ENCODE measurements at regions of chr12 and their contacts with region 1.

Region 1: DNA sequence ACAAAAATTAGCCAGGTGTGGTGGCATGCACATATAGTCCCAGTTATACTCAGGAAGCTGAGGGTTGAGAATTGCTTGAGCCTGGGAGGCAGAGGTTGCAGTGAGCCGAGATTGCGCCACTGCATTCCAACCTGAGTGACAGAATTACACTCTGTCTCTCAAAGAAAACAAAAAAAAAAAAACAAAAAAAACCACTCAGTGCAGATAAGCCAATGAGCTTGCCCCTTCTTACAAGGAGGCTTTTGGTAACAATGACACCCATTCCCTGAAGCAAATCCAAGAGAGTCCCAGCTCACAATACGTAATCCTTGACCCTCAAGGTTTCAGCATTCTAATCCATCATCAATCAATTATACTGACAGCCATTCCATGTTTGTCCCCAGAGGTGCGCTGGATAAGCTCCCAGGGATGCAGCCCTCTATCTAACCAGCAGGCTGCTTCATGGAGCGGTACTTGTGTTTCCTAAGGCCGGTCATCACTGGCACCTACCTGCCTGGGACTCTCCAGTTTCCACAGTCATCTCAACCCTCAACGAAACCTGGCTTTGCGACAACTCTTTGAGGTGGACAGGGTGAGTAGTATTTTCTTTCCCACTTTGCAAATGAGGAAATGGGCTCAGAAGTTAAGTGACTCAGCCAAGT is 12.4 kb downstream of the GCN1 start:
- DNase-seq: no peak
- ATAC-seq: 0 out of 3 replicates have a peak, but pooled peaks have one; percentile 20
- H3K4me3 ChIP-seq: no peak overlapping the region
- H3K27ac ChIP-seq: no peak overlapping the region
- H3K4me1 ChIP-seq: no peaks in the 10 kb centered on the region
- H3K27me3 ChIP-seq: no peaks in the 10 kb centered on the region
- CTCF ChIP-seq: no peak
- EP300 ChIP-seq: no peak
- POLR2A ChIP-seq: no peak
- RAD21 ChIP-seq: no peak

Region 2: DNA sequence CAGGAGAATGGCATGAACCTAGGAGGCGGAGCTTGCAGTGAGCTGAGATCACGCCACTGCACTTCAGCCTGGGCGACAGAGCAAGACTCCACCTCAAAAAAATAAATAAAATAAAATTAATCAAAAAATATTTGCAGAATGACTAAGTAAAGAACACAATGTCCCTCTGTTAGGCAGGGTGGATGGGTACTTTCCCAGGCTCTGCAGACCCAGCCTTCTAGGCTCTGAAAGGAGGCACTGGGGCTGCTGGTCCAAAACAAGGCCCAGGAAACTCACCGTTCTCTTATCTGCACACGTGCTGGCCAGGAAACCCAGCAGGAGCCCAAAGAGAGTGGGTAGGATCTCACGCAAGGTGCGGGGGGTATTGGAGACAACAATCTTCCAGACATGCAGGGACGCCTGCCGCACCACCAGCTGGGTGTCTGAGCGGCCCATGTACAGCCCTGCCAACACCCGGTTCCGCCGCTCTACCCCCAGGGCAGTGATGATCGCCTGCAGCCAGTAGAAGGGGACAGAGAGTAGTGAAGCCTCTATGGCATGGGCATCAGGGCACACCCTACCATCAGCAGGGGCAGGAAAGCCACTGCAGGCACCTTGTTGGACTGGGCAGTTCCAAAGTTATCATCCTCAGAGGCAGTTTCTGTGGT is 39.8 kb before region 1 on chr12:
- CTCF ChIA-PET with region 1: no interaction called
- POLR2A ChIA-PET with region 1: interaction called, 3 read pairs
- in situ Hi-C with region 1: loop called (anchors 5 kb)
- intact Hi-C with region 1: no loop called
- DNase-seq: no peak
- ATAC-seq: no peak
- H3K4me3 ChIP-seq: no peak overlapping the region
- H3K27ac ChIP-seq: no peak overlapping the region
- H3K4me1 ChIP-seq: no peaks in the 10 kb centered on the region
- H3K27me3 ChIP-seq: no peaks in the 10 kb centered on the region
- CTCF ChIP-seq: no peak
- EP300 ChIP-seq: no peak
- POLR2A ChIP-seq: no peak
- RAD21 ChIP-seq: no peak

Measured in K562 (cell line).